Calu3 (cell line): ENCODE measurements at regions of chr4 and their contacts with region 1.

Region 1: DNA sequence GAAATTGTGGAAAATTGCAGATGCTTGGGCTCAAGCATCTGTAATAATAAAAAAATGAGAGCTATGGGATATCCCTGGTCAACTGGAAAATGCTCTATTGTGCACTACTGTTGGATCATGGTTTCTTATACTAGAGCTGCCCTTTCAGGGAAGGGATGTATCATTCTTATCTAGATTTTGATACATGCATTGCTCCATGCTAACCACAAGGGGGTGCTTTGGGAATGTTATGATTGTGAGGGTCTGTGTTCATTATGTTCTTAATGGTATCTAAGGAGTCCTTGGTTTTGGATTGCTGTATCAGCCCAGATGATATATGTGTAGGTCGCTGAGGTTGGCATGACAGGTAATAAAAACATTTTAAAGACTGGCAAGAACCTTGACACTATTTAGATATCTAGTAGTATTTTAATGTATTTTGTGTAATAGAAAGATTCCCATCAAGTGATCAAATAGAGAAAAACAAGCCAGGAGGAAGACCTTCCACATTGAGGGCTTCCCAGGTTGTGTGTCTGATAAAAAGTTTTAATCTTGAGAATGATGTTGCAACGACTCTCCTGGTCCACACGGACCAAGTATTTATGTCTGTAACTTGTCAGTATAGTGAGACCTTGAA is 49.2 kb upstream of the TLR2 start:
- DNase-seq: peak; percentile 14
- H3K4me3 Mint-ChIP-seq: no peak overlapping the region
- H3K27ac Mint-ChIP-seq: no peak overlapping the region
- H3K4me1 Mint-ChIP-seq: no peaks in the 10 kb centered on the region
- H3K27me3 Mint-ChIP-seq: no peaks in the 10 kb centered on the region
- CTCF ChIP-seq: peak; percentile 40

Region 2: GRCh38 chr4:153750197-153750817 is 115.5 kb after region 1 on chr4:
- CTCF ChIA-PET with region 1: interaction called, 4 read pairs
- intact Hi-C with region 1: loop called (anchors 1 kb)
- DNase-seq: peak; percentile 78
- H3K4me3 Mint-ChIP-seq: no peak overlapping the region
- H3K27ac Mint-ChIP-seq: no peak overlapping the region
- H3K4me1 Mint-ChIP-seq: no peaks in the 10 kb centered on the region
- H3K27me3 Mint-ChIP-seq: no peaks in the 10 kb centered on the region
- CTCF ChIP-seq: peak; percentile 52